AG04449 (cell line): ENCODE measurements at regions of chr1 and their contacts with region 1.

Region 1: GRCh38 chr1:66446261-66447001 is 87.5 kb upstream of the SGIP1 start:
- DNase-seq: peak; percentile 26
- H3K4me3 ChIP-seq: no peak overlapping the region
- CTCF ChIP-seq: peak; percentile 60

Region 2: GRCh38 chr1:65948609-65949229 is 497.7 kb before region 1 on chr1:
- CTCF ChIA-PET with region 1: interaction called, 11 read pairs
- POLR2A ChIA-PET with region 1: no interaction called
- DNase-seq: no peak
- H3K4me3 ChIP-seq: no peak overlapping the region
- CTCF ChIP-seq: peak; percentile 22

Region 3: DNA sequence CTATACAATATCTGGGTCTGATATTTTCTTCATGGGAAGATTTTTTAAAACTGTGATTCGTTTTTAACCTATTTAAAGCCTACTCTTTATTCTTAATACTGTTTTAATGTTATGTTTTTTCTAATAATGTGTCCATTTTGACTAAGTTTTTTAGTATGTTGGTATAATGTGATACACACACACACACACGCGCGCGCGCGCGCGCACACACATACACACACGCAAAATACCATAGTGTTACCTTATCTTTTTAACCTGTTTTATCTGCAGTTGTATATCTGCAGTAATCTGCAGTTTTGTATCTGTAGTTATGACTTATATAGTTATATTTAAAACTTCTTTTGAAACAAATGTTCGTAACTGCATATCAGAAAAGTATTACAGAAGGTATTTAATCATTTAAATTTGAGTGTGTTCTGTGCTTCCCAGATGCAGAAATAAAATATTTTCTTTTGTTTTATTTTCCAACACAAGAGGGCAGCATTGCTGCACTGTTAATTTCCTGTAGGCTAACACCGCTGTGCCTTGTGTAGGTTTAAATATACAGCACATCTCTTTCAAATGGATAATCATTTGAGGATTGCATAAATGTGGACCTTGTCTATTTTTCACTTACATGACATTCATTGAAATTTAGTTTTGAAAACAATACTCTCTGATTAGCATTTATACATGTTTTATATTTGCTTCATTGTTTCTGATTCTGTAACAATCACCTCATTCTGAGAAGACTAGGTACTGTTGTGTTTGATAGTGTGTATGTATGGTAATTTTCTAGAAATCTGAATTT is 487.7 kb before region 1 on chr1:
- CTCF ChIA-PET with region 1: interaction called, 77 read pairs
- POLR2A ChIA-PET with region 1: no interaction called
- DNase-seq: no peak
- H3K4me3 ChIP-seq: no peak overlapping the region
- CTCF ChIP-seq: peak; percentile 23

Region 4: GRCh38 chr1:66262211-66262963 is 184.0 kb before region 1 on chr1:
- CTCF ChIA-PET with region 1: interaction called, 807 read pairs
- POLR2A ChIA-PET with region 1: no interaction called
- DNase-seq: peak; percentile 83
- H3K4me3 ChIP-seq: no peak overlapping the region
- CTCF ChIP-seq: no peak

Region 5: GRCh38 chr1:66276218-66276617 is 170.2 kb before region 1 on chr1:
- CTCF ChIA-PET with region 1: interaction called, 14 read pairs
- POLR2A ChIA-PET with region 1: no interaction called
- DNase-seq: no peak
- H3K4me3 ChIP-seq: no peak overlapping the region
- CTCF ChIP-seq: no peak

Region 6: GRCh38 chr1:66478116-66478515 is 31.7 kb after region 1 on chr1:
- CTCF ChIA-PET with region 1: interaction called, 11 read pairs
- POLR2A ChIA-PET with region 1: no interaction called
- DNase-seq: peak; percentile 92
- H3K4me3 ChIP-seq: no peak overlapping the region
- CTCF ChIP-seq: no peak